K562 (cell line): ENCODE measurements at regions of chr2 and their contacts with region 1.

Region 1: GRCh38 chr2:158903711-158904443 is 64.6 kb upstream of the TANC1 start:
- DNase-seq: no peak
- ATAC-seq: no peak
- H3K4me3 ChIP-seq: no peak overlapping the region
- H3K27ac ChIP-seq: no peak overlapping the region
- H3K4me1 ChIP-seq: no peaks in the 10 kb centered on the region
- H3K27me3 ChIP-seq: peaks cover 4% of the 10 kb centered on the region in 2 experiments; a peak in 2 of 5 replicates
- CTCF ChIP-seq: no peak
- EP300 ChIP-seq: no peak
- POLR2A ChIP-seq: no peak
- RAD21 ChIP-seq: no peak

Region 2: DNA sequence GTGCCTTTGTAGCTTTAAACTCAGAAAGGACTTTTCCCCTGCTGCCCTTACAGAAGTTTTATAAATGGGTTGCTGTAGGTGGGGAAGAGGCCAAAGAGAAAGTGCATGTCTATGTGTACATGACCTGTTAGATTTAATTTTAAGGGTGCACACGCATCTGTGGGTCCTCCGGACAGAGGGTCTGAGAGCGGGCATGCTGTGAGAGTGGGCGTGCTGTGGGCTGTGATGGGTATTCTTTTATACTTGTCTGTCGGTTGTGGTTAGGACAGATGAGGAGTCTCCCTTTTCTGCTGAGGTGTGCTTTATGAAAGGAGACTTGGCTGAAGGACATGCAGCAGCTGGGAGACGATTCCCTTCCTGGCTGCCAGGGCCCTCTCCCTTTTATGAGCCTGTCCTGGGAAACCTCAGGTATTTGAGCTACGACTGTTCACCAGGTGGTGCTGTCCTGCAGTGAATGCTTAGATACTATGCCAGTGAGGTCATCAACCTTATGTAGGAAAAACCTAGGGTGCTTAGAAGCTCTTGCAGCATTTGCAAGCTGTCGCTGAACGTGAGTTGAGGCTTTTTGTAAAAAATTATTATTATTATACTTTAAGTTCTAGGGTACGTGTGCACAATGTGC is 132.0 kb after region 1 on chr2:
- CTCF ChIA-PET with region 1: no interaction called
- POLR2A ChIA-PET with region 1: no interaction called
- in situ Hi-C with region 1: no loop called
- intact Hi-C with region 1: loop called (anchors 10 kb)
- DNase-seq: peak; percentile 24 to 51 (median 34)
- ATAC-seq: peak; percentile 90
- H3K4me3 ChIP-seq: no peak overlapping the region
- H3K27ac ChIP-seq: no peak overlapping the region
- H3K4me1 ChIP-seq: peaks cover 4 to 5% of the 10 kb centered on the region in 2 experiments; a peak in 4 of 5 replicates
- H3K27me3 ChIP-seq: peaks cover 8 to 17% of the 10 kb centered on the region in 2 experiments; a peak in 4 of 5 replicates
- CTCF ChIP-seq: peak; percentile 50 to 71 (median 60)
- EP300 ChIP-seq: no peak
- POLR2A ChIP-seq: no peak
- RAD21 ChIP-seq: peak; percentile 71 to 85

Region 3: DNA sequence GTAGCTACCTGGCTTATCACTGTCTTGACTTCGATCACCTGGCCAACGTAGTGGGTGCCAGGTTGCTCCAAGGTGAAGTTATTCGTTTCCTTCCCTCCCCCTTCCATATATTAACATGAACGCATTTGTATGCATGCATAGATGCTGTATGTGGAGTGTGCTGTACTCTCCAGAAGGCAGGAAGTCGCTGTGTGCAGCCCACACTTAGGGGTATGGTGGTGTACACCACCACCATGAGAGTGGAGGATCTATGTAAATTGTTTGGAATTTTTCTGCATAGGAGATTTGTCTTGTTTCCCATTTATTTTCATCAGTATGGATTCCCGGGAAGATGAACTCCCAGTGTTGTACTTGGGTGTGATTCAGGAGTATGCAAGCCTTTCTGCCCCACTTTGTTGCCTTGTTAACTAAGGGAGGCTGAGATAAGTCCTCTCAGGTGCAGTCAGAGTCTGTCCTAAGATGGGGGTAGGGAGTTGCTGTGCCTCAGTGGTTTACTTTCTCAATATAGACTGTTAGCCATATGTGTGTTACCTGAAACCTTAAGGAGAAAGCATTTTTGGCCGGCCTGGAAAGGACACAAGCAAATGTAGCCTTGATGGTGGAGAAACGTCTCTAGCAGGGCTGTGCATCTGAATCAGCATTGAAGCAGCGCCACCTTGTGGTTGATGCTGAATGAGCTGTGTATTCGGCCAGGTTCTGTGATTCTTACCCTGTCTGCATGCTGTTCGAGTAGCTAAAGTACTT is 214.4 kb after region 1 on chr2:
- CTCF ChIA-PET with region 1: interaction called, 20 read pairs
- POLR2A ChIA-PET with region 1: no interaction called
- in situ Hi-C with region 1: loop called (anchors 10 kb)
- intact Hi-C with region 1: loop called (anchors 1 kb)
- DNase-seq: peak; percentile 67 to 89 (median 76)
- ATAC-seq: peak; percentile 97
- H3K4me3 ChIP-seq: no peak overlapping the region
- H3K27ac ChIP-seq: no peak overlapping the region
- H3K4me1 ChIP-seq: peaks cover 5 to 9% of the 10 kb centered on the region in 2 experiments; a peak in 4 of 5 replicates
- H3K27me3 ChIP-seq: peaks cover 3 to 6% of the 10 kb centered on the region in 2 experiments; a peak in 4 of 5 replicates
- CTCF ChIP-seq: peak; percentile 85 to 94 (median 94)
- EP300 ChIP-seq: no peak
- POLR2A ChIP-seq: no peak
- RAD21 ChIP-seq: peak; percentile 96 to 98

Region 4: GRCh38 chr2:159124441-159124911 is 220.6 kb after region 1 on chr2:
- CTCF ChIA-PET with region 1: interaction called, 20 read pairs
- POLR2A ChIA-PET with region 1: no interaction called
- in situ Hi-C with region 1: loop called (anchors 10 kb)
- intact Hi-C with region 1: no loop called
- DNase-seq: peak in 2 of 4 experiments; percentile 68 to 82
- ATAC-seq: peak; percentile 79
- H3K4me3 ChIP-seq: no peak overlapping the region
- H3K27ac ChIP-seq: peak overlapping the region; percentile 30; the same call in 2 of the 3 replicates
- H3K4me1 ChIP-seq: peaks cover 11 to 19% of the 10 kb centered on the region in 2 experiments
- H3K27me3 ChIP-seq: no peaks in the 10 kb centered on the region
- CTCF ChIP-seq: no peak
- EP300 ChIP-seq: no peak
- POLR2A ChIP-seq: no peak
- RAD21 ChIP-seq: no peak

Region 5: DNA sequence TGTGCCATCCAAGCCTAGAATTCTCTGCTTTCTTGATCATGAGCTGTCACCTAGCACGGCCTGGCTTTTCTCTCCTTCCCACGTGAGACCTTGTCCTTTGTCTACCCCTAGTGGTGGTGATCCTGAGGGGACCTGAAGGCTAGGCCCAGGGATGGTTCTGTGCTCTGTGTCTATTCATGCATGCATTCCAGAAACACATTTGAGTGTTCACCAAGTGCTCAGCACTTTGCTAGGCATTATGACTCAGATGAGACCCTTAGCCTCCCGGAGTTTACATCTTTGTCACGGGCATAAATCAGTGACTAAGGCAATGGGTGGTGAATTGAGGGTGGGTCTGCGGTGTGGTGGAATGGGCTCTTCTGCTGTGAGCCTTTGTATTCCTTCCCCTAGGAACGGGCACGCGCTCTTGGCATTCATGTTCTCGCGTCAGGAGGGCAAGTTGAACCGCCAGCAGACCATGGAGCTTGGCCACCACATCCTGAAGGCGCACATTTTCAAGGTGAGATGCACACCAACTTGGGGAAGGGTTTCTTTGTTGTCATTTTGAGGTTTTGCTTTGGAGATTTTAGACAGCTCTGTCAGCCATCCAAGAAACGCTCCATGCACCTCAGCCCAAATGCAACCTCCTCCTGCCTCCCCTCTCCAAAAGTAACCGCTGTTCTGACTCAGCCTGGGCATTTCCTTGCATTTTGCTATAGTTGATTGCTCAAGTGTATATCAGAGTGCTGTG is 281.7 kb after region 1 on chr2:
- CTCF ChIA-PET with region 1: interaction called, 8 read pairs
- POLR2A ChIA-PET with region 1: no interaction called
- in situ Hi-C with region 1: loop called (anchors 10 kb)
- intact Hi-C with region 1: loop called (anchors 1 kb)
- DNase-seq: peak; percentile 57 to 70 (median 64)
- ATAC-seq: peak; percentile 88
- H3K4me3 ChIP-seq: no peak overlapping the region
- H3K27ac ChIP-seq: no peak overlapping the region
- H3K4me1 ChIP-seq: no peaks in the 10 kb centered on the region
- H3K27me3 ChIP-seq: peaks cover 35 to 63% of the 10 kb centered on the region in 2 experiments
- CTCF ChIP-seq: peak; percentile 67 to 84 (median 84)
- EP300 ChIP-seq: no peak
- POLR2A ChIP-seq: no peak
- RAD21 ChIP-seq: peak; percentile 91 to 94

Region 6: GRCh38 chr2:159807183-159808031 is 903.5 kb after region 1 on chr2:
- CTCF ChIA-PET with region 1: no interaction called
- POLR2A ChIA-PET with region 1: no interaction called
- in situ Hi-C with region 1: loop called (anchors 25 kb)
- intact Hi-C with region 1: loop called (anchors 5 kb)
- DNase-seq: peak; percentile 66 to 75 (median 69)
- ATAC-seq: peak; percentile 94
- H3K4me3 ChIP-seq: no peak overlapping the region
- H3K27ac ChIP-seq: no peak overlapping the region
- H3K4me1 ChIP-seq: no peaks in the 10 kb centered on the region
- H3K27me3 ChIP-seq: peaks cover 4 to 6% of the 10 kb centered on the region in 2 experiments; a peak in 2 of 5 replicates
- CTCF ChIP-seq: peak; percentile 82 to 93 (median 89)
- EP300 ChIP-seq: no peak
- POLR2A ChIP-seq: no peak
- RAD21 ChIP-seq: peak; percentile 71 to 85

Region 7: GRCh38 chr2:159968279-159968900 is 1064.5 kb after region 1 on chr2:
- CTCF ChIA-PET with region 1: no interaction called
- POLR2A ChIA-PET with region 1: no interaction called
- in situ Hi-C with region 1: no loop called
- intact Hi-C with region 1: loop called (anchors 5 kb)
- DNase-seq: peak in 3 of 4 experiments; percentile 10 to 34 (median 31)
- ATAC-seq: peak; percentile 79; the same call in 2 of the 3 replicates
- H3K4me3 ChIP-seq: no peak overlapping the region
- H3K27ac ChIP-seq: no peak overlapping the region
- H3K4me1 ChIP-seq: no peaks in the 10 kb centered on the region
- H3K27me3 ChIP-seq: no peaks in the 10 kb centered on the region
- CTCF ChIP-seq: peak; percentile 39 to 56 (median 51); a peak in 4 of 6 replicates
- EP300 ChIP-seq: no peak
- POLR2A ChIP-seq: no peak
- RAD21 ChIP-seq: peak in 1 of 2 experiments; percentile 64; a peak in 2 of 4 replicates